Heart left ventricle (tissue), 16 donors: ENCODE measurements at regions of chr9 and their contacts with region 1.

Region 1: DNA sequence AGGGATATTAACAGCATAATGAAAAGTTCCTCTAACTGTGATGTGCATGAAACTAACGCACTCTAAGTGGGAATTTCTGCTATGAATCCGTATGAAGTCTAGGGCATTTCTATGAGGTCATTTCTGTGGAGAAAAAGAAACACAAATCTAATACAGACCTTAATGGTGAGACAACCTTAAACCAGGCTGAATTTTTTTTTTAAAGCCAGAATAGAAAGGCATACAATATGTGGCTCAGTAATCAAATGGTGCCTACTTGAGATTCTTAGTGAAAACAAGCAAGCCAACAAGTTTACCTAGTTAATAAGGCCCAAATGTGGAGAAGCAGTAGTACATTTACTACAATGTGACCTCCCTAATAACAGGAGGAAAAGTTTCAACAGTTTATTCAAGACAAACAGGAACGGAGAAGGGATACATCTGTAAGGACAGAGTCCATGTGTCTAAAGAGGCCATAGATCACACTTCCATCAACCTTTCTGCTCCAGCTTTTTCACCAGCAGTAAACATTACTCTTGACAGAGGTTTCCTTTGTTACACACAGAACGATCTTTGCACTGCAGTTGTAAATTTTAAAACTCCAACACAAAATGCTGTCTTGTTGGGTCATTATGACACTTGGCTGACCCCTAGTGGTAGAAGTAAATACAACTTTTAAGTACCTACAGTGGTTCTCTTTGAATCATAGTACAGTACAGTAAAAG is 26.2 kb downstream of the CARNMT1 start:
- DNase-seq: peak in 1 of 5 donors; percentile 13
- ATAC-seq: peak; percentile 51 to 89 (median 77)
- H3K4me3 ChIP-seq: no peak overlapping the region
- H3K27ac ChIP-seq: no peak overlapping the region
- H3K4me1 ChIP-seq: peaks cover 0 to 4% (median 0%) of the 10 kb centered on the region in 12 donors
- H3K27me3 ChIP-seq: no peaks in the 10 kb centered on the region
- CTCF ChIP-seq: peak; percentile 58 to 86 (median 82)
- POLR2A ChIP-seq: no peak

Region 2: GRCh38 chr9:74920944-74921626 is 80.8 kb before region 1 on chr9:
- intact Hi-C with region 1: loop called in 1 of 10 experiments (anchors 10 kb)
- DNase-seq: no peak
- ATAC-seq: no peak
- H3K4me3 ChIP-seq: no peak overlapping the region
- H3K27ac ChIP-seq: no peak overlapping the region
- H3K4me1 ChIP-seq: no peaks in the 10 kb centered on the region
- H3K27me3 ChIP-seq: no peaks in the 10 kb centered on the region
- CTCF ChIP-seq: no peak
- POLR2A ChIP-seq: no peak

Region 3: GRCh38 chr9:74973714-74974113 is 28.2 kb before region 1 on chr9:
- intact Hi-C with region 1: loop called in 1 of 10 experiments (anchors 2 kb)
- DNase-seq: no peak
- ATAC-seq: no peak
- H3K4me3 ChIP-seq: no peak overlapping the region
- H3K27ac ChIP-seq: no peak overlapping the region
- H3K4me1 ChIP-seq: no peaks in the 10 kb centered on the region
- H3K27me3 ChIP-seq: no peaks in the 10 kb centered on the region
- CTCF ChIP-seq: no peak
- POLR2A ChIP-seq: no peak